ENCODE measurements at regions of chr7 and their contacts with region 1.

Region 1: DNA sequence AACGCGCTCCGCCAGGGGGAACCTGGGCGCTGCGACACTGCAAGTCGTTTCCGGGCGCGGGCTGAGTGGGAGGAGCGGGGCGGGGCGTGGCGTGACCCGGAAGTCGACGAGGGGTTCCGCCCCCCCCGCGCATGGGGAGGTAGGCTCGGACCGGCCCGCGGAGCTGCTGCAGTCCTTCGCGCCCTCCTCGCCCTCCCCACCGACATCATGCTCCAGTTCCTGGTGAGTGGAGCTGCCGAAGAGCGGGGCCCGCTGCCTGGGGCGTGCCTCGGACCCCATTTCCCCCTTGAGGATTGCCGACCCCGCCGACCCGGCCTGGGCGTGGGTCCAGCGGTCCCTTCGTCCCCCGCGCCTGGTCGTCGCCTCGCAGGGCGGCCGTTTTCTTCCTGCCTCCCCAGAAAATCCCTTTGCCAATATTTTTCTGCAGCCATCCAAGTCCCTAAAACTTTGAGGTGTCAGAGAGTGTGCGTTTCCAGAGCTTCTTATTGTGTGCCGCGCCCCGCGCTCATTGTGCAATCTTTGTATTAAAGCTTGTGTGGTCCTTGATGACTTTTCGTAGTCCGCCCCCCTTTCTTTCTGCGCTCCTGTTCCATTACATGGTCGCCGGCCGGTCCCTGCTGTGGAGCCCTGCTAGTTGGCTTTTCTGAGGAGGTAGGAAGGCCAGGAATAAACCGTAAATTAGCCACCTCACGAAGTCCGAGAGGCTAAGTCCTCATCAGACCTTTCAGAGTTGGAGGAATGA is at the start of gene STMP1:
- DNase-seq: peak; percentile 96
- ATAC-seq: peak; percentile 98
- H3K4me3 Mint-ChIP-seq: peak within 1 kb of the TSS; percentile 91
- H3K27ac Mint-ChIP-seq: peak within 1 kb of the TSS; percentile 79
- H3K4me1 Mint-ChIP-seq: peaks cover 39% of the 10 kb centered on the region
- H3K27me3 Mint-ChIP-seq: no peaks in the 10 kb centered on the region
- CTCF ChIP-seq: no peak
- total RNA-seq, gene STMP1: 24.2 and 26.2 TPM in 2 replicates

Region 2: GRCh38 chr7:134432296-134433152 is 1230.0 kb before region 1 on chr7:
- CTCF ChIA-PET with region 1: no interaction called
- POLR2A ChIA-PET with region 1: no interaction called
- intact Hi-C with region 1: no loop called
- DNase-seq: peak; percentile 56
- ATAC-seq: peak; percentile 89
- H3K4me3 Mint-ChIP-seq: peak overlapping the region; percentile 82
- H3K27ac Mint-ChIP-seq: peak overlapping the region; percentile 82
- H3K4me1 Mint-ChIP-seq: peaks cover 20% of the 10 kb centered on the region
- H3K27me3 Mint-ChIP-seq: no peaks in the 10 kb centered on the region
- CTCF ChIP-seq: no peak

Region 3: DNA sequence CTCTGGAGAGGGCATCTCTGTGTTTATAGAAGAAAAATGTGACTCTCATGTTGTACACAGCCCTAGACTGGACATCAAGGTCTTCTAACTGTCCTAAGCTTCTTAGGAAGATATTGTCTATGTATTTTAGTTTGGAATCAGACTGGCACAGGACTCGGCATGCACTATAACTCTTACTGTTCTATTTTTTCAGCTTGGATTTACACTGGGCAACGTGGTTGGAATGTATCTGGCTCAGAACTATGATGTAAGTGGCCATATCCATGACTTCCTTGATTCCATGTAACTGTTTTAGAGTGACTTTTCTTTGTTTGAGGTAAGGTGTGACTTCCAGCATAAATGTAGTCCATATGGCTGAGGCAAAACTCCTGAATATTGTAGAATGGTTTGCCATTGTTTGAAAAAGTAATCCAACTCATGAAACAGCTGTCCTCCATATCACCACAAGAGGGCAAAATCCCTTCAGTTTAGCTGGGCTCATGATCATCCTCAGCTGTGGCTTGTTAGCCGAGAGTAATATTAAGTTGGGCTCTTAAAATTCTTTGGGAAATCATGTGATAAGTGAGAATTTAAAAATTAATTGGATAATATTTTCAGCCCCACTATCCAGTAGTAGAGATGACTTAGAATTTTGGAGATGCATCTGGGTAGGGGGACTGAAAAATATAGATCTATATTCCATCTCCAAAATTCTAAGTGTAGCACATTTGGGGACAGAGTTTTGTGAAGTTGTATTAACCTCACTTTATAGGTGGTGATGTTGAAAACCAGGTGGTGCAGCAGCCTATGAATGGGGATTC is 10.2 kb after region 1 on chr7:
- CTCF ChIA-PET with region 1: interaction called, 5 read pairs
- POLR2A ChIA-PET with region 1: interaction called, 7 read pairs
- intact Hi-C with region 1: loop called (anchors 1 kb)
- DNase-seq: no peak
- ATAC-seq: peak; percentile 57
- H3K4me3 Mint-ChIP-seq: no peak overlapping the region
- H3K27ac Mint-ChIP-seq: no peak overlapping the region
- H3K4me1 Mint-ChIP-seq: peaks cover 14% of the 10 kb centered on the region
- H3K27me3 Mint-ChIP-seq: no peaks in the 10 kb centered on the region
- CTCF ChIP-seq: peak; percentile 39

Region 4: GRCh38 chr7:135710417-135711138 is 48.0 kb after region 1 on chr7:
- CTCF ChIA-PET with region 1: no interaction called
- POLR2A ChIA-PET with region 1: no interaction called
- intact Hi-C with region 1: no loop called
- DNase-seq: no peak
- ATAC-seq: no peak
- H3K4me3 Mint-ChIP-seq: no peak overlapping the region
- H3K27ac Mint-ChIP-seq: no peak overlapping the region
- H3K4me1 Mint-ChIP-seq: no peaks in the 10 kb centered on the region
- H3K27me3 Mint-ChIP-seq: no peaks in the 10 kb centered on the region
- CTCF ChIP-seq: no peak